ENCODE measurements at regions of chr7 and their contacts with region 1.

Region 1: GRCh38 chr7:92843034-92843760 is 6.8 kb upstream of the CDK6 start:
- DNase-seq: no peak
- ATAC-seq: no peak
- H3K4me3 ChIP-seq: no peak overlapping the region
- H3K27ac ChIP-seq: no peak overlapping the region
- H3K4me1 ChIP-seq: no peaks in the 10 kb centered on the region
- H3K27me3 ChIP-seq: no peaks in the 10 kb centered on the region
- CTCF ChIP-seq: no peak

Region 2: GRCh38 chr7:93043385-93043985 is 200.3 kb after region 1 on chr7:
- intact Hi-C with region 1: loop called in 2 of 10 experiments (anchors 5 to 10 kb)
- DNase-seq: peak in 1 of 2 donors; percentile 24
- ATAC-seq: peak; percentile 8 to 70 (median 42)
- H3K4me3 ChIP-seq: peak overlapping the region in 8 of 10 donors; percentile 16 to 40 (median 31)
- H3K27ac ChIP-seq: no peak overlapping the region
- H3K4me1 ChIP-seq: peaks cover 0 to 5% (median 0%) of the 10 kb centered on the region in 9 donors
- H3K27me3 ChIP-seq: no peaks in the 10 kb centered on the region
- CTCF ChIP-seq: no peak

Measured in heart right ventricle (tissue), 16 donors.